ENCODE measurements at regions of chr21 and their contacts with region 1.

Region 1: GRCh38 chr21:24705201-24705600 is 902.1 kb downstream of the MRPL39 start:
- DNase-seq: no peak
- H3K4me3 ChIP-seq: no peak overlapping the region
- H3K27ac ChIP-seq: no peak overlapping the region
- H3K4me1 ChIP-seq: no peaks in the 10 kb centered on the region
- H3K27me3 ChIP-seq: no peaks in the 10 kb centered on the region
- CTCF ChIP-seq: no peak

Region 2: GRCh38 chr21:23890652-23891051 is 814.5 kb before region 1 on chr21:
- CTCF ChIA-PET with region 1: no interaction called
- POLR2A ChIA-PET with region 1: no interaction called
- intact Hi-C with region 1: loop called (anchors 5 kb)
- DNase-seq: no peak
- H3K4me3 ChIP-seq: no peak overlapping the region
- H3K27ac ChIP-seq: no peak overlapping the region
- H3K4me1 ChIP-seq: no peaks in the 10 kb centered on the region
- H3K27me3 ChIP-seq: no peaks in the 10 kb centered on the region
- CTCF ChIP-seq: no peak

Region 3: GRCh38 chr21:24781146-24781545 is 75.9 kb after region 1 on chr21:
- CTCF ChIA-PET with region 1: no interaction called
- POLR2A ChIA-PET with region 1: no interaction called
- intact Hi-C with region 1: no loop called
- DNase-seq: no peak
- H3K4me3 ChIP-seq: no peak overlapping the region
- H3K27ac ChIP-seq: no peak overlapping the region
- H3K4me1 ChIP-seq: no peaks in the 10 kb centered on the region
- H3K27me3 ChIP-seq: no peaks in the 10 kb centered on the region
- CTCF ChIP-seq: no peak

Measured in PC-9 (cell line).